ENCODE measurements at regions of chr6 and their contacts with region 1.

Region 1: GRCh38 chr6:36678518-36679027 is at the start of gene CDKN1A:
- DNase-seq: peak; percentile 33 to 84 (median 51)
- ATAC-seq: peak; percentile 64
- H3K4me3 ChIP-seq: peak within 1 kb of the TSS; percentile 62
- H3K4me3 Mint-ChIP-seq: peak within 1 kb of the TSS; percentile 87 to 98 (median 94)
- H3K27ac ChIP-seq: peak within 1 kb of the TSS; percentile 66
- H3K27ac Mint-ChIP-seq: peak within 1 kb of the TSS; percentile 73 to 96 (median 87)
- H3K4me1 ChIP-seq: peaks cover 19 to 29% of the 10 kb centered on the region in 2 donors
- H3K4me1 Mint-ChIP-seq: peaks cover 16 to 65% (median 30%) of the 10 kb centered on the region in 7 donors
- H3K27me3 ChIP-seq: no peaks in the 10 kb centered on the region
- H3K27me3 Mint-ChIP-seq: peaks cover 0 to 5% (median 0%) of the 10 kb centered on the region in 5 donors
- total RNA-seq, gene CDKN1A: 1.5 to 156 (median 53.6) TPM

Region 2: DNA sequence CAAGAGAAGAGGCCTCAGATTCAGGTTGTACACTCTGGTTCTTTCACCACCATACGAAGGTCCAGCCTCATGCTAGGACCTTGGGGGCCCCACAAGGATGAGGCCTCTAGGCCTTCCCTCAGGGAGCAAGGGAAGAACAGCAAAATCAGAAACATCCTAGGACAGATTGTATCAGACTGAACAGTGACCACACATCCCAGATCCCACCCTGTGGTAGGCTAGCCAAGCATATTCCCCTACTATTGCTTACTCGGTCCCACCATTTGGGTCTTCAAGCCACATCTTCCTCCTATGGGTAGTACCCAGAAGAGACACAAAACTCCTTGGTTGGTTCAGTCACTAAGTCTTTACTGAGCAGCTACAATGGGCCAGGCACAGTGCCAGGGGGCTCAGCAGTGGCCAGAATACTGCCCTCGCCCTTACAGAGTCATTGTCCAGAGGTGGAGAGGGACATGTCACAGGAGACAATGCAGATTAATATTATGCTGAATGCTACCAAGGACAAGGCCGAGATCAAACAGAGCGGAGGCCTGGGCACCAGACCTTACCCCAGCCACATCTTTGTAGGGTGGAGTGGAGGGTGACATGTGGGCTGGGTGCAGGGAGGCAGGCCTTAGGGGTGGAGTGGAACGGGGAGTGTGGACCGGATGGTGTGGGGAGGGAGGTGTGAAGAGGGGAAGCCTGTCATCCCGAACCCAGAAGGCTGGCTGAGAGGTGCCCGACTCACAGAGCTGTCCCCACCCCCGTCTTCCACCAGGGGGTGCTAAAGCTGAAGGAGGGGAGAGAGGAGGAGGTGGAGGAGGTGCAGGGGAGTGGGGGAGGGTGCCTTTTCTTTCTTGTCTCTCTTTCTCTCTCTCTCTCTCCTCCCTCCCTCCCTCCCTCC is 555.1 kb before region 1 on chr6:
- CTCF ChIA-PET with region 1: no interaction called
- POLR2A ChIA-PET with region 1: no interaction called
- intact Hi-C with region 1: loop called in 1 of 2 experiments (anchors 5 kb)
- DNase-seq: peak; percentile 74 to 96 (median 89)
- ATAC-seq: peak; percentile 83
- H3K4me3 ChIP-seq: peak overlapping the region; percentile 11
- H3K4me3 Mint-ChIP-seq: peak overlapping the region; percentile 36 to 99 (median 60)
- H3K27ac ChIP-seq: peak overlapping the region; percentile 90
- H3K27ac Mint-ChIP-seq: peak overlapping the region; percentile 94 to 100 (median 99)
- H3K4me1 ChIP-seq: peaks cover 64 to 75% of the 10 kb centered on the region in 2 donors
- H3K4me1 Mint-ChIP-seq: peaks cover 63 to 98% (median 87%) of the 10 kb centered on the region in 7 donors
- H3K27me3 ChIP-seq: no peaks in the 10 kb centered on the region
- H3K27me3 Mint-ChIP-seq: no peaks in the 10 kb centered on the region

Region 3: GRCh38 chr6:36340618-36341454 is 337.7 kb before region 1 on chr6:
- CTCF ChIA-PET with region 1: interaction called, 4 read pairs
- POLR2A ChIA-PET with region 1: no interaction called
- intact Hi-C with region 1: loop called in 1 of 2 experiments (anchors 1 kb)
- DNase-seq: peak; percentile 45 to 74 (median 65)
- ATAC-seq: peak; percentile 95
- H3K4me3 ChIP-seq: no peak overlapping the region
- H3K4me3 Mint-ChIP-seq: peak overlapping the region; percentile 38 to 71 (median 64)
- H3K27ac ChIP-seq: no peak overlapping the region
- H3K27ac Mint-ChIP-seq: peak overlapping the region in 4 of 9 donors; percentile 4 to 51 (median 39)
- H3K4me1 ChIP-seq: peaks cover 4 to 5% of the 10 kb centered on the region in 2 donors
- H3K4me1 Mint-ChIP-seq: peaks cover 5 to 25% (median 13%) of the 10 kb centered on the region in 7 donors
- H3K27me3 ChIP-seq: no peaks in the 10 kb centered on the region
- H3K27me3 Mint-ChIP-seq: peaks cover 7 to 44% (median 12%) of the 10 kb centered on the region in 5 donors

Region 4: GRCh38 chr6:36546920-36547645 is 131.5 kb before region 1 on chr6 and contains the start of gene STK38:
- CTCF ChIA-PET with region 1: no interaction called
- POLR2A ChIA-PET with region 1: no interaction called
- intact Hi-C with region 1: loop called (anchors 2 to 5 kb)
- DNase-seq: peak; percentile 79 to 93 (median 88)
- ATAC-seq: peak; percentile 90
- H3K4me3 ChIP-seq: peak within 1 kb of the TSS; percentile 98
- H3K4me3 Mint-ChIP-seq: peak within 1 kb of the TSS; percentile 96 to 99 (median 98)
- H3K27ac ChIP-seq: peak within 1 kb of the TSS; percentile 95
- H3K27ac Mint-ChIP-seq: peak within 1 kb of the TSS; percentile 89 to 99 (median 98)
- H3K4me1 ChIP-seq: peaks cover 29 to 38% of the 10 kb centered on the region in 2 donors
- H3K4me1 Mint-ChIP-seq: peaks cover 15 to 59% (median 42%) of the 10 kb centered on the region in 7 donors
- H3K27me3 ChIP-seq: no peaks in the 10 kb centered on the region
- H3K27me3 Mint-ChIP-seq: no peaks in the 10 kb centered on the region
- total RNA-seq, gene STK38: 68.5 to 193 (median 95.0) TPM

Region 5: DNA sequence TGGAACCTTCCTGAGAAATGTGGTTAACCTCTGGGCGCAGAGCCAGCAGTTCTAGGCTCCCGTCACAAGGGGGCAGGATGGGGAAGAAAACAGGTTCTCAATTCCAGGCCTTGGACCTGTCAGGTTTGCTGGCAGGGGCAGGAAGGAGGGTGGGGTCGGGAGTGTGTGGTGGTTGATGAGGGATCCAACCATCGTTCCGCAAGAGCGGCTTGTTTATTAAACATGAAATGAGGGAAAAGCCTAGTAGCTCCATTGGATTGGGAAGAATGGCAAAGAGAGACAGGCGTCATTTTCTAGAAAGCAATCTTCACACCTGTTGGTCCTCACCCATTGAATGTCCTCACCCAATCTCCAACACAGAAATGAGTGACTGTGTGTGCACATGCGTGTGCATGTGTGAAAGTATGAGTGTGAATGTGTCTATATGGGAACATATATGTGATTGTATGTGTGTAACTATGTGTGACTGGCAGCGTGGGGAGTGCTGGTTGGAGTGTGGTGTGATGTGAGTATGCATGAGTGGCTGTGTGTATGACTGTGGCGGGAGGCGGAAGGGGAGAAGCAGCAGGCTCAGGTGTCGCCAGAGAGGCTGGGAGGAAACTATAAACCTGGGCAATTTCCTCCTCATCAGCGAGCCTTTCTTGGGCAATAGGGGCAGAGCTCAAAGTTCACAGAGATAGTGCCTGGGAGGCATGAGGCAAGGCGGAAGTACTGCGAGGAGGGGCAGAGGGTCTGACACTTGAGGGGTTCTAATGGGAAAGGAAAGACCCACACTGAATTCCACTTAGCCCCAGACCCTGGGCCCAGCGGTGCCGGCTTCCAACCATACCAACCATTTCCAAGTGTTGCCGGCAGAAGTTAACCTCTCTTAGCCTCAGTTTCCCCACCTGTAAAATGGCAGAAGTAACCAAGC is 54.8 kb before region 1 on chr6:
- CTCF ChIA-PET with region 1: interaction called, 25 read pairs
- POLR2A ChIA-PET with region 1: interaction called, 4 read pairs
- intact Hi-C with region 1: loop called (anchors 1 kb)
- DNase-seq: peak; percentile 51 to 76 (median 69)
- ATAC-seq: peak; percentile 86
- H3K4me3 ChIP-seq: no peak overlapping the region
- H3K4me3 Mint-ChIP-seq: no peak overlapping the region
- H3K27ac ChIP-seq: no peak overlapping the region
- H3K27ac Mint-ChIP-seq: peak overlapping the region in 4 of 9 donors; percentile 3 to 64 (median 26)
- H3K4me1 ChIP-seq: peaks cover 3 to 6% of the 10 kb centered on the region in 2 donors
- H3K4me1 Mint-ChIP-seq: peaks cover 8 to 36% (median 10%) of the 10 kb centered on the region in 7 donors
- H3K27me3 ChIP-seq: no peaks in the 10 kb centered on the region
- H3K27me3 Mint-ChIP-seq: peaks cover 0 to 3% (median 0%) of the 10 kb centered on the region in 5 donors

Region 6: GRCh38 chr6:36724514-36725390 is 46.2 kb after region 1 on chr6:
- CTCF ChIA-PET with region 1: no interaction called
- POLR2A ChIA-PET with region 1: no interaction called
- intact Hi-C with region 1: loop called in 1 of 2 experiments (anchors 5 kb)
- DNase-seq: peak in 1 of 9 donors; percentile 58
- ATAC-seq: no peak
- H3K4me3 ChIP-seq: no peak overlapping the region
- H3K4me3 Mint-ChIP-seq: no peak overlapping the region
- H3K27ac ChIP-seq: no peak overlapping the region
- H3K27ac Mint-ChIP-seq: peak overlapping the region in 1 of 9 donors; percentile 8
- H3K4me1 ChIP-seq: peaks cover 0 to 5% of the 10 kb centered on the region in 2 donors
- H3K4me1 Mint-ChIP-seq: peaks cover 7 to 44% (median 11%) of the 10 kb centered on the region in 7 donors
- H3K27me3 ChIP-seq: no peaks in the 10 kb centered on the region
- H3K27me3 Mint-ChIP-seq: no peaks in the 10 kb centered on the region

Measured in naive thymus-derived CD4-positive, alpha-beta T cell (primary cell).